Activated CD4-positive, alpha-beta memory T cell treated with anti-CD3 and anti-CD28 coated beads for 36 hours (primary cell): ENCODE measurements at regions of chr2 and their contacts with region 1.

Region 1: DNA sequence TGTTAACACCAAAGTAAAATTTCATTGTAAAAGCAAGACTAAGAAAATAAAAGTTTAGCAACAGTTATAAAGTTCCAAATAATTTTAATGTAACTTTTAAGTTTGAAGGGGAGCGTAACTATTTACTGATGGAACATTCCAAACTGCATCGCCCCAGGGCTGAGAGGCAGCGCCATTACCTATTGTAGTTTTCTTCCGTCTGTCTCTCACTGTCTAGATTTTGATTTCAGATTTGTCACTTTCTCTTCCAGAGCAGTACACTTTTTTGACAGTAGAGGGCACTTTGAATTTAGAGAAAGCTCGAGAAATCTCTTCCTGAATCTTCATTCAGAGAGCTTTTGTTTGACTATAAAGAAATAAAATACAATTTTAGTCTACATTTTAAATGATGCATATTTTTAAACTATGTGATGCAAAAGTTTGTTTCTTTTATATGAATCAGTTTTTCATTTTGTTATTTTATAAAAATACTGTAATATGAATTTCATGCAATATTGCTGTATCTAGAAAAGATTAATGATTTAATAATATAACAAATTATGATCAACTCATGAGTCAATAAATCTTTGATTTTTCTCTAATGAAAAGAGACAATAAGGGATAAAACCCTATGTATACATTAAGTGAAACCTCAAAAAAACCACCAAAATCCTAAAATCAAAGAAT is 389.8 kb downstream of the FIGN start:
- DNase-seq: no peak
- H3K4me3 Mint-ChIP-seq: no peak overlapping the region
- H3K27ac Mint-ChIP-seq: no peak overlapping the region
- H3K4me1 Mint-ChIP-seq: no peaks in the 10 kb centered on the region
- H3K27me3 Mint-ChIP-seq: peaks cover 6% of the 10 kb centered on the region

Region 2: GRCh38 chr2:164430166-164430783 is 1084.2 kb after region 1 on chr2:
- CTCF ChIA-PET with region 1: no interaction called
- POLR2A ChIA-PET with region 1: no interaction called
- intact Hi-C with region 1: loop called (anchors 5 kb)
- DNase-seq: no peak
- H3K4me3 Mint-ChIP-seq: no peak overlapping the region
- H3K27ac Mint-ChIP-seq: no peak overlapping the region
- H3K4me1 Mint-ChIP-seq: no peaks in the 10 kb centered on the region
- H3K27me3 Mint-ChIP-seq: no peaks in the 10 kb centered on the region

Region 3: GRCh38 chr2:164538240-164538866 is 1192.3 kb after region 1 on chr2:
- CTCF ChIA-PET with region 1: interaction called, 3 read pairs
- POLR2A ChIA-PET with region 1: no interaction called
- intact Hi-C with region 1: loop called (anchors 10 kb)
- DNase-seq: no peak
- H3K4me3 Mint-ChIP-seq: no peak overlapping the region
- H3K27ac Mint-ChIP-seq: no peak overlapping the region
- H3K4me1 Mint-ChIP-seq: no peaks in the 10 kb centered on the region
- H3K27me3 Mint-ChIP-seq: peaks cover 2% of the 10 kb centered on the region

Region 4: GRCh38 chr2:164717000-164717803 is 1371.2 kb after region 1 on chr2:
- CTCF ChIA-PET with region 1: no interaction called
- POLR2A ChIA-PET with region 1: no interaction called
- intact Hi-C with region 1: loop called (anchors 5 kb)
- DNase-seq: no peak
- H3K4me3 Mint-ChIP-seq: no peak overlapping the region
- H3K27ac Mint-ChIP-seq: no peak overlapping the region
- H3K4me1 Mint-ChIP-seq: no peaks in the 10 kb centered on the region
- H3K27me3 Mint-ChIP-seq: no peaks in the 10 kb centered on the region